ENCODE measurements at regions of chr20 and their contacts with region 1.

Region 1: DNA sequence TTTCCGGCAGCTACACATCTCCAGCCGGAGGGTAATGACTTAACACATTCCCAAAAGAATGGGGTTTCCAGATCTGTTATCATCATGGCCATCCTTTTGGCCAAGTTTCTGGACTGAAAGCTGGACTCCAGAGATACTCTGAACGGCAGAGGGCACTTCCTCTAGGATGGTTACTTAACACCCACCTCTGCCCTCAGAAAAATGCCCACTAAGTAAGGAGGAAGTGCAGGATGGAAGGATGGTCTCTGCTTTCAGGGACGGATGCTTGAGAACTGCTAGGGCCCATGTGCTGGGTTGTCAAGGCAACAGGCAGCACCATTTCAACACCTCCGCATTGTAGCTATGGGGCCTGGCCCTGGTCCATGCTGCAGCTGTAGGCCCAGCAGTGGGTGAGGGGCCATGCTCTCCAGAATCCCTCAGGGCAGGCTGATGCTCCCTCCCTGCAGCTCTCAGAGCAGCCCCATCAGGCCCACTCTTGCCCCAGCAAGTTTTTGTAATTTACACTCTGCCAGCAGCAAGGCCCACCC is 16.5 kb upstream of the TGM3 start:
- DNase-seq: peak in 2 of 3 donors; percentile 67 to 73
- H3K4me3 ChIP-seq: no peak overlapping the region
- H3K4me3 Mint-ChIP-seq: no peak overlapping the region
- H3K27ac ChIP-seq: peak overlapping the region in 1 of 2 donors; percentile 5
- H3K27ac Mint-ChIP-seq: peak overlapping the region; percentile 69 to 89 (median 85)
- H3K4me1 ChIP-seq: peaks cover 20 to 22% of the 10 kb centered on the region in 2 donors
- H3K4me1 Mint-ChIP-seq: peaks cover 21% of the 10 kb centered on the region
- H3K27me3 ChIP-seq: peaks cover 0 to 5% of the 10 kb centered on the region in 2 donors
- H3K27me3 Mint-ChIP-seq: peaks cover 10 to 14% (median 11%) of the 10 kb centered on the region in 3 donors
- CTCF ChIP-seq: no peak

Region 2: DNA sequence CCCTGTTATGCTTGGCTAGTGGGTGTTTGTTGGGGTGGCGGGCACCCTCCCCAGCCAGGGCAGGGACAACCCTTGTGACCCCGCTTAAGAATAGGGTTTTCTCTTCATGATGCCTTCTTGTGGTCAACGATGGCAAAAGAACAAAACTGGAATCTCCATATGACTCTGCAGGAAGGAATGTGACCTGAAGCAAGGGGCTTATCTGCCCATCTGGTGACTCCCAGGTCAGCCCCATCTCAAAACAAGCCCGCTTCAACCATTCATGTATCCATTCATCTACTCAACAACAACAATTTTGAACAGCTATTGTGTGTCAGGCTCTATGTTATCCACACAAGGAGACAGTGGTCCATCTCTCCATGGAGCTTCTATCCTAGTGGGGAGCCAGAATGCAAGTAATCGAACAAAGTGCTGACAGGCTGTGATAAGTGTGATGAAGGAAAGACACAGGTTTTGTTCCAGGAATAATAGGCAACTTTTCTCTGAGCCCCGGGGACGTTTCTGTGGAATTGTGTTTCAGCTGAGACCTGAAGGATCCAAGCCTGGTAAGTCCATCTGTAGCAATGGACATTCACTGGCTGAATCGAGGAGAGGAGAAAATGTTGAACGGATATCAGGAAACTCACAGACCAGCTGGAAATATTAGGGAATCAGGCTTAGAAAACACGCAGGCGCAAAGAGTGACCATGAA is 70.6 kb after region 1 on chr20:
- intact Hi-C with region 1: loop called (anchors 5 to 10 kb)
- DNase-seq: no peak
- H3K4me3 ChIP-seq: no peak overlapping the region
- H3K4me3 Mint-ChIP-seq: no peak overlapping the region
- H3K27ac ChIP-seq: no peak overlapping the region
- H3K27ac Mint-ChIP-seq: peak overlapping the region in 1 of 7 donors; percentile 30
- H3K4me1 ChIP-seq: peaks cover 0 to 9% of the 10 kb centered on the region in 2 donors
- H3K4me1 Mint-ChIP-seq: peaks cover 15% of the 10 kb centered on the region
- H3K27me3 ChIP-seq: peaks cover 8 to 21% of the 10 kb centered on the region in 2 donors
- H3K27me3 Mint-ChIP-seq: peaks cover 28 to 45% (median 40%) of the 10 kb centered on the region in 3 donors
- CTCF ChIP-seq: no peak

Measured in CD14-positive monocyte (primary cell).